Astrocyte of the cerebellum (primary cell): ENCODE measurements at regions of chr11 and their contacts with region 1.

Region 1: GRCh38 chr11:48116437-48117228 is 100.0 kb upstream of the OR4B1 start:
- DNase-seq: no peak
- H3K4me3 ChIP-seq: no peak overlapping the region
- CTCF ChIP-seq: peak; percentile 43

Region 2: DNA sequence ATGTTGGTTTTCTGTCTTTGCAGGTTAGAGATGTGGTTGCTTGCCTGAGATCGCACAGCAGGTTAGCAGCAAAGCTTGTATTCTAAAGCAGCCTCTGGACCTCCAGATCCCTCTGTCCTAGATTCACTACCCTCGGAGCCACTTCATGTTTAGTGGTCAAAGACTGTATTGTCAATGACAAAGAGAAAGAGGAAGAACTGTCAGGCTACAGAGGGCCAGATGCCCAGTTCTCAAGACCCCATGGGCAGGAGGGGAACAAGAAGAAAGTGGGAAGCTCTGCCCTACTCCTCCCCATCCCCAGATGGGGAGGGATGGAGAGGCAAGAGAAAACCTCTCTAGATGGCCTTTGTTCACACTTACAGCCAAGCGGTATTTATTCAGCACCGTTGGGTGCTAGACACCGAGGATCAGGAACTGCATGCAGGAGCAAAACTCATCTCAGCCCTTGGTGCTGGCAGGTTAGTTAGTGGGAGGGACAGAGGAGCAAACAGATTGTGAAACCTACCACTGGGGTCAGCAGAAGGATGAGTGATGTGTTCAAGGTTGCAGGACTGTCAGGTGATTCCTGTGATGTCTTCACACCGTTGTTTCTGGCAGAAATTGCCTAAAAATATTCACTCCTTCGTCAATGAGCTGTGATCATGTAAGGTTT is 174.6 kb before region 1 on chr11:
- in situ Hi-C with region 1: loop called (anchors 5 kb)
- DNase-seq: no peak
- H3K4me3 ChIP-seq: no peak overlapping the region
- CTCF ChIP-seq: no peak